Activated naive CD4-positive, alpha-beta T cell treated with anti-CD3 and anti-CD28 coated beads, Interleukin-2, amount 10 ng/mL, durations not matched to agents 7 days and 5 days (primary cell): ENCODE measurements at regions of chr11 and their contacts with region 1.

Region 1: DNA sequence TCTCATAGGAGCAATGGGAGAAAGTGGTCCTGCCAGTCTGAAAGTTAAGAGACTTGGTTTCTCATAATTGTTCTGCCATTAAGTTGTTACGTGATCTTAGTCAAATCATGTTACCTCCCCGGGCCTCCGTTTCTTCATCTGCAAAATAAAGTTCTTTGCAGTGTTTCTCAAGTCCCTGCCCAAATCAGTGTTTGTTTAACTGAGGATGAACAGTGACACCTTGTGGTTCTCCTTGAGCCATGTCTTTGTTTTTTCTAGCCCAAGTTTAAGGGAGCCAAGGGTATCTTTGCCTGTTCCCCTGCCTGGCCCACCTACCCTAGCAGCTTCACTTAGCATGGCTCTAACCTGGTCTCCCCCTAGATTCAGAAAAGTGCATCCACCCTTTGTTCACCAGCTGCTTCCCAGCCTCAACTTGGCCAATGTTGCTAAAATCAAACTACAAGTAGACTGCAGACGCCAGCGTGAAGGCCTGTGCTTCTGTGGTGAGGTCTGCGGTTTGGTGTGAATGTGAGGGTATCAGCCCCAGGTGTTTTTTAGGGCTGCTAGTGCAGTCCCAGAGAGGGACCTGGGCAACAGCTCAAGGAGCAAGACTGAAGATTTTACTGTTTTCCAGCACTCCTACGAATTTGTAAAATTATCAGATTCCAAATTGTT is 35.5 kb downstream of the FZD4 start:
- DNase-seq: peak; percentile 31
- H3K4me3 Mint-ChIP-seq: no peak overlapping the region
- H3K27ac Mint-ChIP-seq: no peak overlapping the region
- H3K4me1 Mint-ChIP-seq: peaks cover 15% of the 10 kb centered on the region
- H3K27me3 Mint-ChIP-seq: peaks cover 10% of the 10 kb centered on the region

Region 2: DNA sequence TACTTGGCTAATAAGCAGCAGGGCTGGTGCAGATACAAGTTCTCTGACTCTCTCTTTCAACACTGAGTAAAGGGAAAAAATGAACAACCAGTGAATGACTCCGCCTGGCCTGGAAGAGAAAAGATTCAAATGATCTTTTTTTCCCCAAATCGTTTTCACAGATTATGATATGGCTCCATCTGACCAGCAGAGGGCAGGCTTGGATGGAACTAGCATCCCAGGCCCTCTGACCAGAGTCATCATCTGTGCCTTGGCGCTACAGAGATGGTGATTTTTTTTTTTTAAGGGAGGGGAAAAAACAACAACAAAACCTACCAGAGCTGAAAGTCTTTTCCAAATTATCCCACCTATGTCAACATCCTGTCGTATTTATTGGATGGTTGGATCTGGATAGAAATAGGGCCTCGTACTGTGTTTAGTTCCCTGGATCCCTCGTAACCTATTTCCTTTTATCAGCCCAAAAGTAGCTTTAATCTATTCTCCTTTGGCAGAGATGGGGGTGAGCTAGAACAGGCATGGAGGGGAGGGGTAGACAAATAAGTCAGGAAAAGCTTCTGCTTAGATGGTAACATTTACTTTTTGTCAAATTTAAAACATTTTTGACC is 49.6 kb before region 1 on chr11:
- CTCF ChIA-PET with region 1: interaction called, 18 read pairs
- DNase-seq: peak; percentile 64
- H3K4me3 Mint-ChIP-seq: no peak overlapping the region
- H3K27ac Mint-ChIP-seq: no peak overlapping the region
- H3K4me1 Mint-ChIP-seq: no peaks in the 10 kb centered on the region
- H3K27me3 Mint-ChIP-seq: peaks cover 13% of the 10 kb centered on the region